ENCODE measurements at regions of chr21 and their contacts with region 1.

Region 1: DNA sequence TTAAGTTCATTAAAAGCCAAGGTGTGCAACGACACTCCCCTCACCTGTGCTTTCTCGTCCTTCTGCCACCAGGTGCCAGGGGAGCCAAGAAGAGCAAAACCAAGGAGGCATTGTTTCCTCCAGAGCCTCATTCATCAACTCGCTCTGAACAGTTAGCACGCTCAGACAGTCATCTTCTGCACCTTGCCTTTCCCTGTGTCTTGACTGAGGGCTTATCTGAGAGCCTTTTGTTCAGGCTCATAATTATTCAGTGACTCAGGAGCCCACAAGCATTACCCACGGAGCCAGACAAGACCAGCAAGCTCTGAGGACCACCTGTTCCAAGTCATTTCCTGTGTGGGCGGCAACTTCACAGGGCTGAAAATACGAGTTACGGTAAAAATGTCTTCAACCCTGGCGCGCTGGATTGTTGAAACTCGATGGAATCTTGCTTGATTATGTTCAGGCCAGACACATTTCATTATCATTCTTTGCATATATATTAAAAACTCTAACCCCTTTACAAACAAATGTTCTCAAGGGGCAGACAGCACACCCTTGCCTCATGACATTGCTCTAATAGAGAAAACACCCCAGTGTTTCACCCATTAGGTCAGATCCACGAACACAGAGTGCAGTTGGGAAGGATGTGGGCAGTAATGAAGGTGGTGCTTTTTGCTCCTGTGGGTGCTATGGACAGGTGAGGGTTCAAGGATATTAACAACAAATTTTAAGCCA is 89.7 kb upstream of the RUNX1 start:
- DNase-seq: peak; percentile 87
- H3K4me3 Mint-ChIP-seq: peak overlapping the region; percentile 70
- H3K27ac Mint-ChIP-seq: peak overlapping the region; percentile 95
- H3K4me1 Mint-ChIP-seq: peaks cover 38% of the 10 kb centered on the region
- H3K27me3 Mint-ChIP-seq: no peaks in the 10 kb centered on the region

Region 2: GRCh38 chr21:34812504-34813265 is 326.1 kb before region 1 on chr21:
- CTCF ChIA-PET with region 1: no interaction called
- intact Hi-C with region 1: loop called (anchors 5 kb)
- DNase-seq: no peak
- H3K4me3 Mint-ChIP-seq: no peak overlapping the region
- H3K27ac Mint-ChIP-seq: no peak overlapping the region
- H3K4me1 Mint-ChIP-seq: peaks cover 81% of the 10 kb centered on the region
- H3K27me3 Mint-ChIP-seq: no peaks in the 10 kb centered on the region

Region 3: DNA sequence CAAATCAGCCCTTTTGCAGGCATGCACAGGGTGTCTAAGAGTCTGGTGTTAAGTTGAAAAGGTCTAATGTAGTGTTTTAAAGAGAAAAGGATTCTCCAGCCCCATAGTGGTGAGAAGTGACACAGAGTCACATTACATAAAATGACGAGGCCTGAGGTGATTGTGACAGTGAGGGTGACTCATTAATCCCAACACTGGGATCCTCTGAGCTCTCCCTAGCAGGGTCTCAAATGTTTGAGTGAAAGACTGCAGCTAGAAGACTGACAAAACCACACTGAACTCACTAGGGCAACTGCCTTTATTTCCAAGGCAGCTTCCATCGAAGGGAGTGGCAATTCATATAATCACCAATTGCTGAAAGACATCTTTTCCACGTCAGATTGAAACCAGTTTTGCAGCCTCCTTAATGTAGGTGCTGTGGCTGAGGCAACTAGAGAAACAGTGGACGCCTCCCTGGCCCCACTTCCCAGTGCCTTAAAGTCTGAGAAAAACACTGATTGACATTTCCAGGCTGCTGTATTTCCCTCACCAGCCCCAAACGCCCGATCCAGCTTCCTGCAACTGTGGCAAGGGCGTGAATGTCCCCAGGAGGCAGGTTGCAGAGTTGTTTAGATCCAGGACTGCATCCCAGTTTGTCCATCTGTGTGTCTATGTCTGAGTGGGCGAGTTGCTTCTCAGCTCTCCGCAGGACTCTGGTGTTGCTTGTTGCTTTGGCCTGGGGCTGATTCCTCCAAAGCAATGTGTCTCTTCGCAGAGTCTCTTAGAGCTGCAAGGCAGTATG is 171.1 kb before region 1 on chr21:
- CTCF ChIA-PET with region 1: no interaction called
- intact Hi-C with region 1: loop called (anchors 2 kb)
- DNase-seq: peak; percentile 73
- H3K4me3 Mint-ChIP-seq: peak overlapping the region; percentile 47
- H3K27ac Mint-ChIP-seq: peak overlapping the region; percentile 93
- H3K4me1 Mint-ChIP-seq: peaks cover 84% of the 10 kb centered on the region
- H3K27me3 Mint-ChIP-seq: no peaks in the 10 kb centered on the region

Region 4: DNA sequence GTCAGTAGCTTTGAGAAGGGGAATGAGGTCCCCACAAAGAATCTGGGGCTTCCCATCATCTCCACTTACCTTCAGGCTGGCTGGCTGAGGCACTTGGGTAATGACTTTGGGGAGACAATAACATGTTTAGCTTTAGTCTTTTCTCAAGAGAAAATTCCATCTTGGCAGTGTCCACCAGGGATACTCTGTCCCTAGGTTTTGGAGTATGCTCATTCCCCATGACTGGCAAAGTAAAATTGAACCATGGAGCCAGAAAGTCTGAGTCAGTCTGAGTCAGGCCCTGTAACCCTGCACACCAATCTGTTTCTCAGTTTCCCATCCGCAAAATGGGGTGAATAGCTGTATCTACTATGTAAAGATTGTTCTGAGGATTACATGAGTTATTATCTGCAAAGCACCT is 117.9 kb before region 1 on chr21:
- CTCF ChIA-PET with region 1: interaction called, 4 read pairs
- intact Hi-C with region 1: loop called (anchors 1 kb)
- DNase-seq: peak; percentile 52
- H3K4me3 Mint-ChIP-seq: no peak overlapping the region
- H3K27ac Mint-ChIP-seq: peak overlapping the region; percentile 80
- H3K4me1 Mint-ChIP-seq: peaks cover 89% of the 10 kb centered on the region
- H3K27me3 Mint-ChIP-seq: no peaks in the 10 kb centered on the region

Region 5: GRCh38 chr21:35095859-35096291 is 42.9 kb before region 1 on chr21:
- CTCF ChIA-PET with region 1: interaction called, 3 read pairs
- intact Hi-C with region 1: loop called (anchors 2 kb)
- DNase-seq: no peak
- H3K4me3 Mint-ChIP-seq: no peak overlapping the region
- H3K27ac Mint-ChIP-seq: no peak overlapping the region
- H3K4me1 Mint-ChIP-seq: peaks cover 32% of the 10 kb centered on the region
- H3K27me3 Mint-ChIP-seq: no peaks in the 10 kb centered on the region

Region 6: GRCh38 chr21:35150562-35151226 is 11.9 kb after region 1 on chr21:
- CTCF ChIA-PET with region 1: interaction called, 7 read pairs
- intact Hi-C with region 1: loop called (anchors 1 kb)
- DNase-seq: no peak
- H3K4me3 Mint-ChIP-seq: no peak overlapping the region
- H3K27ac Mint-ChIP-seq: peak overlapping the region; percentile 91
- H3K4me1 Mint-ChIP-seq: peaks cover 52% of the 10 kb centered on the region
- H3K27me3 Mint-ChIP-seq: no peaks in the 10 kb centered on the region

Region 7: DNA sequence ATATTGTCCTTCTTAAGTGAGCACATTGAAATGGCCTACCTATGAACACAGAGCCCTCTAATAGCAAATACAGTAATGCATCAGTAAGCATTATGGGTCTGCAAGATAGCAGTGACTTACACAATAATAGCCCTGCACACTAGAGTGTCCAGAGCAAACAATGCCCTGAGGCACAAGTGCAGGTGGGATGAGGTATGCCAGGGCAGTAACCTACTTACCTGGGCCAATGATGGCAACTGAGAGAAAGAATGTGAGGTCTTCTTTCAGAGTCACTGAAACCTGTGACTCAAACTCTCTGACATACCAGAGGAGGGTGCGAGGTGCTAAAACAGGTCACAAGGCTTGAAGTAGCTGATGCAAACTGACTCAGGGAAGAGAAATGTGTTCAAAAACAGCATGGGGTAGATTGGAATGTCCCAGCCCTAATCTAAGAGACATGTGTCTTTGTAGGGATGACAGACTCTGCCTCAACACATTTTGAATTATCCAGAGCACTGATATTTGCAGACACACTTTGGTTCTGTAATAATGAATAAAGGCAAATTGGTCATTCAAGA is 78.8 kb after region 1 on chr21:
- CTCF ChIA-PET with region 1: no interaction called
- intact Hi-C with region 1: loop called (anchors 2 kb)
- DNase-seq: peak; percentile 82
- H3K4me3 Mint-ChIP-seq: no peak overlapping the region
- H3K27ac Mint-ChIP-seq: peak overlapping the region; percentile 82
- H3K4me1 Mint-ChIP-seq: peaks cover 32% of the 10 kb centered on the region
- H3K27me3 Mint-ChIP-seq: no peaks in the 10 kb centered on the region